Common myeloid progenitor, CD34-positive (primary cell): ENCODE measurements at regions of chr9 and their contacts with region 1.

Region 1: DNA sequence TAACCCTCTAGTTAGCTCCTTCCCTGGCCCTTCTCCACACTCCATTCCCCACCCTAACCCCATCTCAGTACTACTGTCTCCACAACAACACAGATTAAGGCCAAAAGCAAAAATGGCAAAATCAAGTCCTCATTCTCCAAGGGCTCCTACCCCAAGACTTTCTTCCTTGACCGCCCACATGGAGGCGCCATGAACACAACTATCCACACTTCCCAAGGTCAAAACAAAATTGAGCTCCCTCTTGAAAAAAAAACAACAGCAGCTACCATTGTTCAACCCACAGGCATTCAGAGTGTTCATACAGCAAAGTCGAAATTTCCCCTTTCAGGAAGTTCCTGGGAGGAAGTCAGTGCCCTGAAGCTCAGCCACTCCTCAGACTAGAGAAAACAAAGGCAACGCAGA is 54.4 kb downstream of the GNAQ start:
- DNase-seq: peak; percentile 83 to 86 (median 85)
- H3K4me3 ChIP-seq: peak overlapping the region in 5 of 7 experiments; percentile 11 to 57 (median 43)
- H3K27ac ChIP-seq: peak overlapping the region in 1 of 2 experiments; percentile 67
- H3K4me1 ChIP-seq: peaks cover 23 to 77% (median 54%) of the 10 kb centered on the region in 4 experiments
- H3K27me3 ChIP-seq: no peaks in the 10 kb centered on the region

Region 2: DNA sequence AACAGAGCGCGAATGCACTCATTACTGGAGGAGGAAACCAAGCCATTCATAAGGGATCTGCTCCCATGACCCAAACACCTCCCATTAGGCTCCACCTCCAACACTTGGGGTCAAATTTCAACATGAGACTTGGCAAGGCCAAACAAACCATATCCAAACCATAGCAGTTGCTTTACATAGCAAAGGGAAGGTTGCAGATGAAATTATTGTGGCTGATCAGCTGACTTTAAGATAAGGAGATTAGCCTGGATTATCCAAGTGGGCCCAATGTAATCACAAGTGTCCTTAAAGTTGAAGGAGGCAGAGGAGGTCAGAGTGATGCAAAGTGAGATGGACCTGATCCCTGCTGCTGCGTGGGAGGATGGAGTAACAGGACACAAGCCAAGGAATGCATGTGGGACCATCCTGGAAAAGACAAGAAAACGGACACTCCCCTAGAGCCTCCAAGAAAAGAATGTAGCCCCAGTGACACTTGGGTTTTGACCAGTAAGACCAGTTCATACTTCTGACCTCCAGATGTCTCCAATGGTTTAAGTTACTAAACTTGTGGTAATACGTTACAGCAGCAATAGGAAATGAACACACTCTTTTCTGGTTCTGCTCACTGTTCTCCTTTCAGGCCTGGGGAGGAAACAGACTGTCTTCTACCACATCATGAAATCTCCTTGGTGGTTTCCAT is 112.9 kb before region 1 on chr9:
- CTCF ChIA-PET with region 1: interaction called, 28 read pairs
- POLR2A ChIA-PET with region 1: no interaction called
- DNase-seq: peak; percentile 86 to 96 (median 93)
- H3K4me3 ChIP-seq: no peak overlapping the region
- H3K27ac ChIP-seq: peak overlapping the region in 1 of 2 experiments; percentile 23
- H3K4me1 ChIP-seq: peaks cover 14 to 22% (median 19%) of the 10 kb centered on the region in 4 experiments
- H3K27me3 ChIP-seq: no peaks in the 10 kb centered on the region

Region 3: GRCh38 chr9:77879410-77879943 is 97.7 kb before region 1 on chr9:
- CTCF ChIA-PET with region 1: no interaction called
- POLR2A ChIA-PET with region 1: no interaction called
- DNase-seq: no peak
- H3K4me3 ChIP-seq: no peak overlapping the region
- H3K27ac ChIP-seq: no peak overlapping the region
- H3K4me1 ChIP-seq: peaks cover 6 to 32% (median 19%) of the 10 kb centered on the region in 4 experiments
- H3K27me3 ChIP-seq: no peaks in the 10 kb centered on the region

Region 4: DNA sequence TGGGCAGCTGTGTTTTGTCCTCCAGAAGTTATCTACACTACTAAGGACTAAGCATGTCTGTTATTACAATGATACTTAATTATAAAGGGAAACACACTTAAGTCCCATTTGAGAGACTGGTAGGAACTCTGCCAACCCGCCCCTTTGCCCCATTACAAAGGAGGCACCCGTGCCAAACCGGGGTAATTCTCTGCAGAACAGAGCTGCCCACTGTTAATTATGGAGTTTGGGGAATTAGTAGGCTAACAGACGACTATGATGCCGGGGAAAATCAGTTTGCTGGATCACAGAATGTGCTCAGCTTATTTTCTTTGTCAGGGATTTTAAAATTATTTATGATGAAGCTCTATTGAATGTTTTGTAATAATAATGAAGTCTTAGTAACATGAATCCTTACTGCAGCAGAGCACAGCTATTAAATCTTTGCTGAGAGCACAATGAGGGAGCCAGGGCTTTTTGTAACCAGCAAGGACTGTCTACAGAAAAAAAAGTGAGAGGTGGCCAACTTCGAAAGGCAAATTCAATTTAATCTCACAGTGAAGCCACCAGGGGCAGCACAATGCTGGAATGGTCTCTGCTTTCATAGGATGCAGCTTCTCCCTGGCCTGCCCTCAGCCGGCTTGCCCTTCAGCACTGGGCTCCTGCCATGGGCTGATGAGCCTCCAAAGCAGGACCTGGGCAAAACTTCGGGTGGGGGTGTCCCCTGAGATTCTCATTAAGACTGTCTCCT is 80.1 kb before region 1 on chr9:
- CTCF ChIA-PET with region 1: interaction called, 11 read pairs
- POLR2A ChIA-PET with region 1: no interaction called
- DNase-seq: peak in 2 of 3 donors; percentile 49 to 59
- H3K4me3 ChIP-seq: no peak overlapping the region
- H3K27ac ChIP-seq: peak overlapping the region in 1 of 2 experiments; percentile 8
- H3K4me1 ChIP-seq: peaks cover 15 to 62% (median 47%) of the 10 kb centered on the region in 4 experiments
- H3K27me3 ChIP-seq: no peaks in the 10 kb centered on the region

Region 5: DNA sequence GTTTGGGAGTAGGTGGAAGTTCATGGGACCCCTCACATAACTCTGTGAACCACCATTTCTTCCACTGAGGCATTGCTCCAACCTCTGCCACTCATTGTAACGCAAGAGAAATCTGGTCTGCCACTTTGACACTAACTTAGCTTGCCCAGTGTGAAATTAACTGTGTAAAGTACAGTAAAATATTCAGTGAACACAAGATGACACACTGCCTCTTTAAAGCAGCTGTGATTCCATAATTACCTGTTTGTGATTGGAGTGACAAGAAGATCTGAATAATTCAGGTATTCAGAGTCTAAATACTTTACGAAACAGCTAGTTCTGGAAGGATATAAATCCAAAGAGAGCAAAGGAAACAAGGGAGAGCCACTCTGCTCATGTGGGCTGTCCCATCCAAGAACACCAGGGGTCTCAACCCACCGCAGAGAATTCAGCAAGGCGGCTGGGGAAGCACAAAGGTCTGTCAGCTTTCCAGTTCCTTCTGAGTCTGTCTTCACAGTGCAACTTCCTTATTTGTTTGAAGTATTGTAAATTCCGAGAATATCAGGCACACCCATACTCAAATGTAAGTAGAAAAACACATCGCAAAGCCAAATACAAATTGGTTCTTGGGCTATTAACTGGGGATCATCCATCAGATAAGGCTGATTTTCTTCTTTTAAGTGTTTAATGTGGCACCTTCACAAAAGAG is 32.5 kb before region 1 on chr9:
- CTCF ChIA-PET with region 1: interaction called, 28 read pairs
- POLR2A ChIA-PET with region 1: no interaction called
- DNase-seq: peak; percentile 79 to 93 (median 90)
- H3K4me3 ChIP-seq: peak overlapping the region in 4 of 7 experiments; percentile 42 to 58 (median 56)
- H3K27ac ChIP-seq: peak overlapping the region; percentile 40 to 71
- H3K4me1 ChIP-seq: peaks cover 27 to 81% (median 55%) of the 10 kb centered on the region in 4 experiments
- H3K27me3 ChIP-seq: no peaks in the 10 kb centered on the region

Region 6: GRCh38 chr9:78004478-78005229 is 27.4 kb after region 1 on chr9:
- CTCF ChIA-PET with region 1: interaction called, 135 read pairs
- POLR2A ChIA-PET with region 1: interaction called, 3 read pairs
- DNase-seq: peak; percentile 39 to 61 (median 55)
- H3K4me3 ChIP-seq: no peak overlapping the region
- H3K27ac ChIP-seq: no peak overlapping the region
- H3K4me1 ChIP-seq: peaks cover 8 to 53% (median 31%) of the 10 kb centered on the region in 4 experiments
- H3K27me3 ChIP-seq: no peaks in the 10 kb centered on the region

Region 7: DNA sequence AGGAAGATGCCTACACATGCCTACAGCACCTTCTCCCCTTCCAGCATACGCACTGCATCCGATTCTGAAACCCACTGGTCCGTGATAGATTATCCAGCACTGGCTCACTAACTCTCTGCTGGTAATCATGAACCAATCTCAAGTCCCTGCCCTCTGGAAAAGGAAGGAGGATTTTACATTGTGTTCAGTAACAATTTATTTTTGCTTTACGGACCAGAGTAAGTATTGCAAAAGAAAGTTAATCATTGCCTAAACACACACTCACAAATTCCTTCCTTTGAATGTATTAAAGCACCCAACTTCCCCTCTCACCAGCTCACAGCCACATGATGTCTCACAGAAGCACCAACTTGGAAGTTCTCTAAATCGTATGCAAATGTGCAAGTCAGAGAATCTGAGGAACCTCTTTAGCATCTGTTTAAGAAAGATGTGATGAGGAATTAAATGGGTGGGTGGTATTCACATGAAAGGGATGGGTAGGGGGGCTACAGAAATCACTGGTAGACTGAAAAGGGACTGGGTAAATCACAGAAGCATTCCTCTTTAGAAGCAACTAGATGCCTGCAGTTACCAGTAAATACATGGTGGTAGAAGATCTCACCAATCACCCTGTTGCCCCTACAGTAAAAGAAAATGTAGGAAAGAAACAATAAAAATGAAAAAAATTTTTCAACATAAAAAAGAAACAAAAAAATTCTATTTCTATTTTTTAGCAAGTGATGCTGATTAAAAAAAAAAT is 46.0 kb after region 1 on chr9:
- CTCF ChIA-PET with region 1: interaction called, 22 read pairs
- POLR2A ChIA-PET with region 1: no interaction called
- DNase-seq: peak; percentile 76 to 98 (median 96)
- H3K4me3 ChIP-seq: peak overlapping the region in 6 of 7 experiments; percentile 50 to 82 (median 64)
- H3K27ac ChIP-seq: peak overlapping the region; percentile 41 to 67
- H3K4me1 ChIP-seq: peaks cover 17 to 80% (median 52%) of the 10 kb centered on the region in 4 experiments
- H3K27me3 ChIP-seq: no peaks in the 10 kb centered on the region

Region 8: DNA sequence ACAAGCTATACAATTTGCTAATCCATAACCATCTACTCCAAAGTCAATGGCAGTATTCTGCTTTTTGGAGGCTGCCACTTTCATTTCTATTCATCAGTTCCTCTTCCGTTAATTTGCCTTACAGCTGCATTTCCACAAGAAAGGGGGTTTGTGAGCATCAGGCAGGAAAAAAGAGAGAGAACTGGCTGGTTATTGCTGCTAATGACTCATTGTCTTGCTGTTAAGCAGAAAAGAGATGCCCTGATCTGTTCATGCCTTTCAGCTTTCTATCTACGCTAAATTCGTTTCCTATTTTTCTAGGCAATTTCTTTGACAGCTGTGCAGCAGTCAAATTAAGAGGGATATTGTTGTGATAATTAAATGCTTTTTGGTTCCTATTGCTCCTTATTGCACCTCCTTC is 120.3 kb after region 1 on chr9:
- CTCF ChIA-PET with region 1: no interaction called
- POLR2A ChIA-PET with region 1: no interaction called
- DNase-seq: peak; percentile 43 to 89 (median 84)
- H3K4me3 ChIP-seq: peak overlapping the region in 5 of 7 experiments; percentile 23 to 64 (median 31)
- H3K27ac ChIP-seq: no peak overlapping the region
- H3K4me1 ChIP-seq: peaks cover 0 to 20% (median 14%) of the 10 kb centered on the region in 4 experiments
- H3K27me3 ChIP-seq: no peaks in the 10 kb centered on the region

Region 9: GRCh38 chr9:78121488-78121887 is 144.3 kb after region 1 on chr9:
- CTCF ChIA-PET with region 1: interaction called, 36 read pairs
- POLR2A ChIA-PET with region 1: no interaction called
- DNase-seq: peak; percentile 69 to 82 (median 70)
- H3K4me3 ChIP-seq: no peak overlapping the region
- H3K27ac ChIP-seq: no peak overlapping the region
- H3K4me1 ChIP-seq: peaks cover 0 to 13% (median 2%) of the 10 kb centered on the region in 4 experiments
- H3K27me3 ChIP-seq: no peaks in the 10 kb centered on the region

Region 10: GRCh38 chr9:78278177-78278777 is 301.1 kb after region 1 on chr9:
- CTCF ChIA-PET with region 1: no interaction called
- POLR2A ChIA-PET with region 1: no interaction called
- DNase-seq: no peak
- H3K4me3 ChIP-seq: no peak overlapping the region
- H3K27ac ChIP-seq: no peak overlapping the region
- H3K4me1 ChIP-seq: peaks cover 0 to 3% (median 0%) of the 10 kb centered on the region in 4 experiments
- H3K27me3 ChIP-seq: no peaks in the 10 kb centered on the region